B cell (primary cell): ENCODE measurements at regions of chr10 and their contacts with region 1.

Region 1: GRCh38 chr10:69392481-69393000 is 24.2 kb downstream of the TACR2 start:
- DNase-seq: peak; percentile 86
- ATAC-seq: peak; percentile 100
- H3K4me3 ChIP-seq: no peak overlapping the region
- H3K4me3 Mint-ChIP-seq: no peak overlapping the region
- H3K27ac ChIP-seq: peak overlapping the region in 1 of 2 donors; percentile 11
- H3K27ac Mint-ChIP-seq: peak overlapping the region; percentile 50
- H3K4me1 ChIP-seq: peaks cover 5 to 14% of the 10 kb centered on the region in 2 donors
- H3K4me1 Mint-ChIP-seq: peaks cover 14% of the 10 kb centered on the region
- H3K27me3 ChIP-seq: no peaks in the 10 kb centered on the region
- H3K27me3 Mint-ChIP-seq: no peaks in the 10 kb centered on the region
- CTCF ChIP-seq: peak; percentile 87

Region 2: DNA sequence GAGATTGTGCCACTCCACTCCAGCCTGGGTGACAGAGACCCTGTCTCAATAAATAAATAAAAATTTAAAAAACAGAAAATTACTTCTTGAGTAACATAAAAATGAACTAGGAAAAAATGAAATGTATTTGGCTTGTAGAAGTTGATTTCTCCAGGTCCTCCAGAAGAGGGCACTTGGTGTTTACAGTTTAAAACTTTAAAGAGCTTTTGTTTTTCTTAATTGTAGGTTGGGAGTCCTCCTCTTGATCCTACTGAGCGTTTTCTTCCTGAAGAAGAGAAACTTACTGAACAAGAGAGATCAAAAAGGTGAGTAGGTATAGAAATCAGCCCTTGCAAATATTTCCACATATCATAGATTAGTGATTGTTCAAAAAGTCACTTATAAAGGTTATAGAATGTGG is 387.7 kb before region 1 on chr10:
- CTCF ChIA-PET with region 1: interaction called, 3 read pairs
- POLR2A ChIA-PET with region 1: no interaction called
- intact Hi-C with region 1: loop called (anchors 5 kb)
- DNase-seq: peak; percentile 52
- ATAC-seq: no peak
- H3K4me3 ChIP-seq: no peak overlapping the region
- H3K4me3 Mint-ChIP-seq: no peak overlapping the region
- H3K27ac ChIP-seq: no peak overlapping the region
- H3K27ac Mint-ChIP-seq: no peak overlapping the region
- H3K4me1 ChIP-seq: no peaks in the 10 kb centered on the region
- H3K4me1 Mint-ChIP-seq: no peaks in the 10 kb centered on the region
- H3K27me3 ChIP-seq: no peaks in the 10 kb centered on the region
- H3K27me3 Mint-ChIP-seq: no peaks in the 10 kb centered on the region
- CTCF ChIP-seq: peak; percentile 72

Region 3: GRCh38 chr10:69229622-69229928 is 163.0 kb before region 1 on chr10:
- CTCF ChIA-PET with region 1: interaction called, 281 read pairs
- POLR2A ChIA-PET with region 1: no interaction called
- intact Hi-C with region 1: no loop called
- DNase-seq: no peak
- ATAC-seq: no peak
- H3K4me3 ChIP-seq: peak overlapping the region in 4 of 5 experiments; percentile 3 to 23 (median 8)
- H3K4me3 Mint-ChIP-seq: peak overlapping the region; percentile 78
- H3K27ac ChIP-seq: peak overlapping the region; percentile 51 to 65
- H3K27ac Mint-ChIP-seq: peak overlapping the region; percentile 76
- H3K4me1 ChIP-seq: peaks cover 26 to 34% of the 10 kb centered on the region in 2 donors
- H3K4me1 Mint-ChIP-seq: peaks cover 37% of the 10 kb centered on the region
- H3K27me3 ChIP-seq: no peaks in the 10 kb centered on the region
- H3K27me3 Mint-ChIP-seq: no peaks in the 10 kb centered on the region
- CTCF ChIP-seq: no peak

Region 4: DNA sequence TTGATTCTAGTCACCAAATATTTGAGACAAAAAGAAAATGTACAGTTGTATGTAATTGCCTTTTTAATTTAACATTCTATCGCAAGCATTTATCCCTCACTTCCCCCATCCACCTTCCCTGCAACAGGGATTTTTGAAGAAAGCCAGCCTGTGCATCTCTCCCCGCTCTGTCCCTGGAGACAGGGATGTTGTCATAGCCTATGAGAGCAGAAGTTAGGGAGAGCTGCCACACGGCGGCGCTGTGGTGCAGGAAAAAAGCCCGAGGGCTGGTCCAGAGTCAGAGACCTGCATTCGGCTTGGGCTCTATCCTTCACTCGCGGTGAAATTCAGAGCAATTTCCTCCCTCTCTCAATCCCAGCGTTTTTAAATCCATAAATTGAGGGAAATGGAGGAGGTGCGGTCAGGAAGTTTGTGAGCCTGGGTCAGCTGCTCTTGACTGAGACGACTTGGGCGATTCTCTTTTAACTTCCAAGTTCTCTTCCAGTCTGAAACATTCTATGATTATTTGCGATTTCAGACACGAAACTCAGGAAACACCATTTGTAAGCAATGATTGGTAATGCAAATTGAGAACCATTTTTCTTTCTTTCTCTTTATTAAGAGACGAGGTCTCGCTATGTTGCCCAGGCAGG is 154.9 kb before region 1 on chr10:
- CTCF ChIA-PET with region 1: interaction called, 281 read pairs
- POLR2A ChIA-PET with region 1: no interaction called
- intact Hi-C with region 1: loop called (anchors 1 kb)
- DNase-seq: peak; percentile 85
- ATAC-seq: peak; percentile 99
- H3K4me3 ChIP-seq: no peak overlapping the region
- H3K4me3 Mint-ChIP-seq: no peak overlapping the region
- H3K27ac ChIP-seq: no peak overlapping the region
- H3K27ac Mint-ChIP-seq: no peak overlapping the region
- H3K4me1 ChIP-seq: peaks cover 0 to 3% of the 10 kb centered on the region in 2 donors
- H3K4me1 Mint-ChIP-seq: no peaks in the 10 kb centered on the region
- H3K27me3 ChIP-seq: no peaks in the 10 kb centered on the region
- H3K27me3 Mint-ChIP-seq: no peaks in the 10 kb centered on the region
- CTCF ChIP-seq: peak; percentile 88

Region 5: GRCh38 chr10:69318106-69318866 is 74.3 kb before region 1 on chr10:
- CTCF ChIA-PET with region 1: interaction called, 13 read pairs
- POLR2A ChIA-PET with region 1: interaction called, 4 read pairs
- intact Hi-C with region 1: loop called (anchors 5 kb)
- DNase-seq: peak; percentile 93
- ATAC-seq: peak; percentile 93
- H3K4me3 ChIP-seq: peak overlapping the region; percentile 3 to 98 (median 94)
- H3K4me3 Mint-ChIP-seq: peak overlapping the region; percentile 96
- H3K27ac ChIP-seq: peak overlapping the region; percentile 82 to 85
- H3K27ac Mint-ChIP-seq: peak overlapping the region; percentile 91
- H3K4me1 ChIP-seq: peaks cover 22 to 31% of the 10 kb centered on the region in 2 donors
- H3K4me1 Mint-ChIP-seq: peaks cover 37% of the 10 kb centered on the region
- H3K27me3 ChIP-seq: no peaks in the 10 kb centered on the region
- H3K27me3 Mint-ChIP-seq: no peaks in the 10 kb centered on the region
- CTCF ChIP-seq: no peak

Region 6: GRCh38 chr10:69506834-69507721 is 114.5 kb after region 1 on chr10:
- CTCF ChIA-PET with region 1: interaction called, 3 read pairs
- POLR2A ChIA-PET with region 1: no interaction called
- intact Hi-C with region 1: loop called (anchors 5 kb)
- DNase-seq: no peak
- ATAC-seq: no peak
- H3K4me3 ChIP-seq: peak overlapping the region in 2 of 5 experiments; percentile 33 to 38
- H3K4me3 Mint-ChIP-seq: peak overlapping the region; percentile 57
- H3K27ac ChIP-seq: no peak overlapping the region
- H3K27ac Mint-ChIP-seq: no peak overlapping the region
- H3K4me1 ChIP-seq: peaks cover 0 to 5% of the 10 kb centered on the region in 2 donors
- H3K4me1 Mint-ChIP-seq: peaks cover 5% of the 10 kb centered on the region
- H3K27me3 ChIP-seq: no peaks in the 10 kb centered on the region
- H3K27me3 Mint-ChIP-seq: peaks cover 39% of the 10 kb centered on the region
- CTCF ChIP-seq: no peak